ENCODE measurements at regions of chr19 and their contacts with region 1.

Region 1: DNA sequence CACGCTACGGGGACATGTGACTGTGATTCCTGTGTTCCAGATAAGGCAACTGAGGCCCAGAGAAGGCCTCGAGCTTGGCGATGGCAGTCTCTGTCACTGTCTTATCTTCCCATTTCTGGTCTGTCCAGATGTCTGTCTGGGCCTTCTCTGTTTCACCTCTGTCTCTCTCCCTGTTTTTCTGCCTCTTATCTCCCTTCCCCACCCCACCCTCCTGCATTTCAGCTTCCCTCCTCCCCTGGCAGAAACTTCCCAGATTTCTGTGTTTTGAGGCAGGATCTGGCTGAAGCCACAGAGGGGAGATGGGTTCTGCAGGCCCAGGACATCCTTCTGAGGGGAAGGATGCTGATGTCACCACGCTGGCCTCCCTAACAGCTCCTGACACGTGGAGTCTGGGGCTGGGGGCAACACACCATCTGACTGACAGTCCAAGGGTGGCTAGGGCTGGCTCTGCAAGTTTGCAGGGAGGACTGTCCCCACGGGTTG is 14.4 kb downstream of the PAK4 start:
- H3K4me3 ChIP-seq: no peak overlapping the region
- H3K27ac ChIP-seq: no peak overlapping the region
- H3K4me1 ChIP-seq: peaks cover 28% of the 10 kb centered on the region
- CTCF ChIP-seq: no peak

Region 2: GRCh38 chr19:39163621-39164020 is 23.6 kb after region 1 on chr19:
- CTCF ChIA-PET with region 1: interaction called, 4 read pairs
- POLR2A ChIA-PET with region 1: interaction called, 11 read pairs
- H3K4me3 ChIP-seq: no peak overlapping the region
- H3K27ac ChIP-seq: no peak overlapping the region
- H3K4me1 ChIP-seq: peaks cover 12% of the 10 kb centered on the region
- CTCF ChIP-seq: no peak